GM18951 (cell line): ENCODE measurements at regions of chr2 and their contacts with region 1.

Region 1: DNA sequence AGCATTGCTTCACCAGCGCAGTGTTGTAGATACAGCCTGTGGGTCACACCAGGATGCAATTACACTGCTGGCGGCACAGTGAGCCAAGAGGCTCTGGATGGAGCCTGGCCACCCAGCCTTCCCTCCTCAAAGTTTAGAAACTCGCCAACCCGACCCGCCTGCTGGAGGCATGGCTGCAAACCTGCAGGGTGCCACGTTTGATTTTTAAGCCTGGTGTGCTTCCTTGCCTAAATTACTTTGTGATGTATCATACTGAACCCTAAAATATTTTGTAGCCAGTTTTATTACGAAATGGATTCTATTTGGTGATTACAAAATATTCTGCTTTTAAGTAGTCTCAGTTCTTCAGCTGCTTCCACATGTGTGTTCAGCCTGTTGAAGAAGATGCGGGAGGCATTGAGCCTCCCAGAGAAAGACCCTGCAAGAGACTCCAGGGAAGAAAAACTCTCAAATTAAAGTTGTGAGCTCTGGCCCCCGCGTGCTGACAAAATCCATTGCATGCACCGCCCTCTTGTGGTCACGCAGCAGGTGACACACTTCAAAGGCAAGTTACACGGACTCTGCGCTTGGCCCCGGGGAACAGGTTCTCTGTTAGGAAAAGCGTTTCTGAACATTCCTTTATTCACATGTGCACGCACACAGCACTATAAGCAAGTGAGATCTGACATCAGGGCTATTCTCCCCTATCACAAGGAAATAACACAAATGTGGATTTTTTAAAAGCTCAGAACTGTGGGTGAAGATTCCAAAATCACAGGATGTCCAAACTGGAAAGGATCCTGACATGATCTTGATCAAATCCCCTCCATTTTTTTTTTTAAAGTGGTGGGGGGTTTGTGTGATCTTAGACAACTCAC is 63.0 kb upstream of the TWIST2 start:
- POLR2A ChIP-seq: no peak

Region 2: GRCh38 chr2:238370823-238371372 is 414.0 kb before region 1 on chr2:
- in situ Hi-C with region 1: loop called (anchors 25 kb)
- POLR2A ChIP-seq: no peak